CD4-positive, alpha-beta T cell (primary cell): ENCODE measurements at regions of chr1 and their contacts with region 1.

Region 1: DNA sequence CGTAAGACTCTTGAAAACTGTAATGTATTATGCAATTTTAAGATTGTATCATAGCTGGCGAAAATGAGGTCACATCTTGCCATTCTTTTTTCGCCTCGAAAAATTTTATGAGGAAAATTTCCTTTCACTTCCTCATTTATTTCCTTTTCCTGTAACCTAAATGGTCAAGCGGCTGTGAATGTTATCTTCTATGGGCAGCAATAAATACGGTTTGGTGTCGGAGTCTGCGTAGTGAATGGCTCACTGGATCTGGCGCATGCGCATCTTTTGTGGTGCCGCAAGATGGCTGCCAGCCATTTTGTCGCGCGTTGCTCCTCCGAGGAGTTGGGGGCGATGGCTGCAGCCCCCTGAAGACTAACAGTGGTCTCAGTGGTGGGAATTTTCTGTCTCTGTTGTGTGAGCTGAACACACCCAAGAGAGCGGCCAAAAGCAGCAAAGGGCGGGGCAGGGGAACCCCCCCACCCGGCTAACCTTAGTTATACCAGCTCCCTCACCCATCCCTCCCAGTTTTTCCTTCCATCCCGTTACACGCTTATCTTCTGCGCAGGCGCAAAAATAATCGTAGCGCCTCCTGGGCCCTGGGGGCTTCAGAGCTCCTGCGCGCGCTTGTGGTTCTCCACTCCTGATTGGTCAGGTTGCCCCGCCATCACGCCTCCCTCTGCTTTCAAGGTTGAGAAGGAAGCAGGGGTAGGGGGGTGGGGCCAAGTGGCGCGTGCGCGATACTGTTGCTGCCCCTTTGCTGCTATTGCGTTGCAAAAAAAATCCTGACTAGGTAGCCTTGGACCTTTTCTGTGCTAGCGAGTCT is at the start of gene RPRD2:
- DNase-seq: peak; percentile 95 to 100 (median 99)
- ATAC-seq: peak; percentile 93
- H3K4me3 ChIP-seq: peak within 1 kb of the TSS; percentile 70
- H3K4me3 Mint-ChIP-seq: peak within 1 kb of the TSS; percentile 100
- H3K27ac ChIP-seq: peak within 1 kb of the TSS; percentile 93 to 97
- H3K27ac Mint-ChIP-seq: peak within 1 kb of the TSS; percentile 96
- H3K4me1 ChIP-seq: peaks cover 17% of the 10 kb centered on the region
- H3K4me1 Mint-ChIP-seq: peaks cover 37% of the 10 kb centered on the region
- H3K27me3 ChIP-seq: no peaks in the 10 kb centered on the region
- H3K27me3 Mint-ChIP-seq: no peaks in the 10 kb centered on the region
- CTCF ChIP-seq: no peak
- total RNA-seq, gene RPRD2: 27.1 to 27.9 TPM

Region 2: GRCh38 chr1:150186789-150187559 is 176.7 kb before region 1 on chr1:
- CTCF ChIA-PET with region 1: no interaction called
- POLR2A ChIA-PET with region 1: no interaction called
- intact Hi-C with region 1: no loop called
- DNase-seq: peak in 7 of 14 experiments; percentile 6 to 79 (median 49)
- ATAC-seq: peak; percentile 84
- H3K4me3 ChIP-seq: no peak overlapping the region
- H3K4me3 Mint-ChIP-seq: no peak overlapping the region
- H3K27ac ChIP-seq: no peak overlapping the region
- H3K27ac Mint-ChIP-seq: no peak overlapping the region
- H3K4me1 ChIP-seq: peaks cover 10% of the 10 kb centered on the region
- H3K4me1 Mint-ChIP-seq: peaks cover 9% of the 10 kb centered on the region
- H3K27me3 ChIP-seq: peaks cover 0 to 3% of the 10 kb centered on the region in 2 experiments
- H3K27me3 Mint-ChIP-seq: peaks cover 4% of the 10 kb centered on the region
- CTCF ChIP-seq: peak; percentile 86

Region 3: DNA sequence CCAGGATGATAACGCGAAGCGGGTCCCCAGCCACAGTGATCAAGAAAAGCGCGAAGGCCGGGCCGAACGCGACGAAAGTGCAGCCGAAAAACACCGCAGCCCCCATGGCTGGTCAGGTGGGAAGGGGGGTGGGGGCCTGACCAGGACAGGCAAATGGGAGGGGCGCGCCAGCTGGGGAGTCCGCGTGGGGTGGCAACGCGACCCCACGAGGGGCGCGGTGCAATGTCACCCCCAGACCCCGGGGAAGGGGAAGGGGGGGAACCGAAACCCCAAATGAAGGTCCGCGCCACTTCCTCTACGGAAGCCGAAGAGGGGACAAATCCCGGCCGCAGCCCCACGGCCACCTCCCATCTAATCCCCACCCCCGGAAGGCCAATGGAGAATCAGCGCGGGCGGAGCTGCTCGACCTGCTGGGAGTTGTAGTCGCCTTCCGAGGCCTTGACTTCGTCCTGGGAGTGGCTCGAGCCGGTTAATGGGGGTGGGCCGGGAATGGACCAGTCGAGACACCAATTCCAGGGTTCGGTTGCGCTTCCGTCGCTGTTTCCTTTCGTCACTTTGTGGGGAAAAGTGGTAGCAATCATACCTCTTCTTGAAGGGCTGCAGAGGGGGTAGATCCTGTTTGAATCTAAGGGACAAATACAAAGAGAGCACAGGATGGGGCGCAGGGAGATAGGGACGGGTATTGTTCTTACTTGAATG is 94.8 kb before region 1 on chr1 and contains the start of gene APH1A:
- CTCF ChIA-PET with region 1: no interaction called
- POLR2A ChIA-PET with region 1: interaction called, 26 read pairs
- intact Hi-C with region 1: no loop called
- DNase-seq: peak; percentile 80 to 96 (median 90)
- ATAC-seq: peak; percentile 89
- H3K4me3 ChIP-seq: peak within 1 kb of the TSS; percentile 95
- H3K4me3 Mint-ChIP-seq: peak within 1 kb of the TSS; percentile 99
- H3K27ac ChIP-seq: peak within 1 kb of the TSS; percentile 91 to 96
- H3K27ac Mint-ChIP-seq: peak within 1 kb of the TSS; percentile 91
- H3K4me1 ChIP-seq: peaks cover 29% of the 10 kb centered on the region
- H3K4me1 Mint-ChIP-seq: peaks cover 38% of the 10 kb centered on the region
- H3K27me3 ChIP-seq: no peaks in the 10 kb centered on the region
- H3K27me3 Mint-ChIP-seq: no peaks in the 10 kb centered on the region
- CTCF ChIP-seq: no peak
- total RNA-seq, gene APH1A: 115 to 122 TPM

Region 4: DNA sequence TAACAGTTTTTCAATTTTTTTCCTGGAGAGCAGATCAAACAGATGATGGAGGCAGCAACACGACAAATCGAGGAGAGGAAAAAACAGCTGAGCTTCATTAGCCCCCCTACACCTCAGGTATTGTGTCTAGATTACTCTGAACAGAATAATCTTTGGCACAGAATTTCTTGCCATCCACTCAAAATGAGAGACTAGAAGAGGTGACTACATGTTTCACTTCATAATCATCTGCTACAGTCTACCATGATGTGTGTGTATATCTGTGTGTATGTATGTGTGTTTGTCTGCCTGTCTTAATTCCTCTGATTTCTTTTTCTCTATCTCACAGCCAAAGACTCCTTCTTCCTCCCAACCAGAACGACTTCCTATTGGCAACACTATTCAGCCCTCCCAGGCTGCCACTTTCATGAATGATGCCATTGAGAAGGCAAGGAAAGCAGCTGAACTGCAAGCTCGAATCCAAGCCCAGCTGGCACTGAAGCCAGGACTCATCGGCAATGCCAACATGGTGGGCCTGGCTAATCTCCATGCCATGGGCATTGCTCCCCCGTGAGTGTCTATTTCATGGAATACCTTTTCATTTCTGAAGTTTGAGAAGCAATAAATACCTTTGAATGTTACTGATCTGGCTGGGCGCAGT is 30.9 kb before region 1 on chr1:
- CTCF ChIA-PET with region 1: no interaction called
- POLR2A ChIA-PET with region 1: interaction called, 11 read pairs
- intact Hi-C with region 1: no loop called
- DNase-seq: no peak
- ATAC-seq: no peak
- H3K4me3 ChIP-seq: no peak overlapping the region
- H3K4me3 Mint-ChIP-seq: no peak overlapping the region
- H3K27ac ChIP-seq: no peak overlapping the region
- H3K27ac Mint-ChIP-seq: peak overlapping the region; percentile 24
- H3K4me1 ChIP-seq: no peaks in the 10 kb centered on the region
- H3K4me1 Mint-ChIP-seq: peaks cover 6% of the 10 kb centered on the region
- H3K27me3 ChIP-seq: no peaks in the 10 kb centered on the region
- H3K27me3 Mint-ChIP-seq: no peaks in the 10 kb centered on the region
- CTCF ChIP-seq: no peak

Region 5: DNA sequence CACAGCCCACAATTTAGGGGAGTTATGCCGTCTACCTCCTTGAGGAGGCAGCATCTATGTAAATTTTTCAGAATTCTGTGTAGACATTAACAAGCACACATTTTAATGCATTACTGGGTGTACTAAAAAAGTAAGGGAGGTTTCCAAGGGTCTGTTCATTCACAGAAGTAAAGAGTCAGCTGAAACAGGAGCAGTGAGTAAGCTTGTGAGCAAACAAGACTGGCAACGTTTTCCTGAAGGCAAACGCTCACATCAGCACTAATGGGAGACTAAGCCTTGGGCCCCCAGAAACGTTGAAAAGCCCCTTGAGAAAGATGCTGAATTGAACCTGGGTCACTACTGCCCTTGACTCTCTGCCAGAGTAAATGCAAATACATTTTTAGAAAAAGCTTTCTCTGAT is 26.0 kb after region 1 on chr1:
- CTCF ChIA-PET with region 1: no interaction called
- POLR2A ChIA-PET with region 1: interaction called, 14 read pairs
- intact Hi-C with region 1: no loop called
- DNase-seq: no peak
- ATAC-seq: no peak
- H3K4me3 ChIP-seq: no peak overlapping the region
- H3K4me3 Mint-ChIP-seq: no peak overlapping the region
- H3K27ac ChIP-seq: no peak overlapping the region
- H3K27ac Mint-ChIP-seq: peak overlapping the region; percentile 6
- H3K4me1 ChIP-seq: peaks cover 28% of the 10 kb centered on the region
- H3K4me1 Mint-ChIP-seq: peaks cover 59% of the 10 kb centered on the region
- H3K27me3 ChIP-seq: no peaks in the 10 kb centered on the region
- H3K27me3 Mint-ChIP-seq: no peaks in the 10 kb centered on the region
- CTCF ChIP-seq: no peak

Region 6: DNA sequence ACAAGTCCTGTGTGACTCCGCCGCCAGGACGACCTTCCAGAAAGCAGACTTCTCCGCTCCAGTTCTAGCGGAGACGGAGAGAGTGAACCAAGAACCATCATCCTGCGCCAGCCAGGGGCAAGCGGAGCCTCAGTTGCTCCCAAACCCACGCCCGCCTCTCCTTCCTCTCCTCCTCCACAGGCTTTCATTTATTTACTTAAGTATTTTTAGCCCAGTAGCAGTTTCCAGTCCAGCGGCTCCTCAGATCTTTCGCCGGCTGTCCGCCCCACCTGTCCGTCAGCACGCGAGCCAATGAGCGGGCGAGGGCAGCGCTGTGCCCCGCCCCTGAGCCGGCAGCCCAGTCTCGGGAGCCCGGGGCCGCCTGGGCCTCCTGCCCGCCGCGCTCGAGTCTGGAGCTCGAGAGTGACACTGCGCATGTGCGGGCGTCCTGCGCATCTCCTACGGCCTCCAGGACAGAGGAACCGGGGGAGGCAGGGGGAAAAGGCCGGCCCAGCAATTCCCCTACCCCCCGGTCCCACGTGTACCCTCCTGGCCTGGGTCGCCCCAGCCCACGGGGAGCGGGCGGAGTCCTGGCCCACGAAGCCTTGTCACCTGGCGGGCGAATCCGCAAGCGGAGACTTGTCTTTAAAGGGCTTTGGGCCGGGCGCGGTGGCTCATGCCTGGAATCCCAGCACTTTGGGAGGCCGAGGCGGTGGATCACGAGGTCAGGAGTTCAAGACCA is 151.9 kb after region 1 on chr1 and contains the start of gene FALEC:
- CTCF ChIA-PET with region 1: no interaction called
- POLR2A ChIA-PET with region 1: interaction called, 10 read pairs
- intact Hi-C with region 1: no loop called
- DNase-seq: peak; percentile 75 to 95 (median 87)
- ATAC-seq: peak; percentile 95
- H3K4me3 ChIP-seq: peak within 1 kb of the TSS; percentile 82
- H3K4me3 Mint-ChIP-seq: peak within 1 kb of the TSS; percentile 87
- H3K27ac ChIP-seq: peak within 1 kb of the TSS in 1 of 2 donors; percentile 7
- H3K27ac Mint-ChIP-seq: peak within 1 kb of the TSS; percentile 39
- H3K4me1 ChIP-seq: peaks cover 17% of the 10 kb centered on the region
- H3K4me1 Mint-ChIP-seq: peaks cover 20% of the 10 kb centered on the region
- H3K27me3 ChIP-seq: no peaks in the 10 kb centered on the region
- H3K27me3 Mint-ChIP-seq: no peaks in the 10 kb centered on the region
- CTCF ChIP-seq: no peak
- total RNA-seq, gene FALEC: not detected

Region 7: GRCh38 chr1:150629115-150629928 is 265.7 kb after region 1 on chr1 and contains the start of gene ENSA:
- CTCF ChIA-PET with region 1: no interaction called
- POLR2A ChIA-PET with region 1: interaction called, 23 read pairs
- intact Hi-C with region 1: no loop called
- DNase-seq: peak; percentile 89 to 99 (median 92)
- ATAC-seq: peak; percentile 85
- H3K4me3 ChIP-seq: peak within 1 kb of the TSS; percentile 77
- H3K4me3 Mint-ChIP-seq: no peak within 1 kb of the TSS
- H3K27ac ChIP-seq: peak within 1 kb of the TSS; percentile 96 to 97
- H3K27ac Mint-ChIP-seq: no peak within 1 kb of the TSS
- H3K4me1 ChIP-seq: peaks cover 24% of the 10 kb centered on the region
- H3K4me1 Mint-ChIP-seq: peaks cover 21% of the 10 kb centered on the region
- H3K27me3 ChIP-seq: no peaks in the 10 kb centered on the region
- H3K27me3 Mint-ChIP-seq: no peaks in the 10 kb centered on the region
- CTCF ChIP-seq: no peak
- total RNA-seq, gene ENSA: 132 to 137 TPM